Mammary epithelial cell (primary cell): ENCODE measurements at regions of chr6 and their contacts with region 1.

Region 1: GRCh38 chr6:136792410-136793262 is at the start of gene MAP3K5:
- DNase-seq: peak; percentile 90
- H3K4me3 ChIP-seq: peak within 1 kb of the TSS; percentile 68 to 97 (median 79)
- H3K27ac ChIP-seq: peak within 1 kb of the TSS; percentile 82
- H3K4me1 ChIP-seq: peaks cover 19% of the 10 kb centered on the region
- H3K27me3 ChIP-seq: no peaks in the 10 kb centered on the region
- CTCF ChIP-seq: peak; percentile 66 to 95
- total RNA-seq, gene MAP3K5: 4.2 to 8.8 TPM

Region 2: DNA sequence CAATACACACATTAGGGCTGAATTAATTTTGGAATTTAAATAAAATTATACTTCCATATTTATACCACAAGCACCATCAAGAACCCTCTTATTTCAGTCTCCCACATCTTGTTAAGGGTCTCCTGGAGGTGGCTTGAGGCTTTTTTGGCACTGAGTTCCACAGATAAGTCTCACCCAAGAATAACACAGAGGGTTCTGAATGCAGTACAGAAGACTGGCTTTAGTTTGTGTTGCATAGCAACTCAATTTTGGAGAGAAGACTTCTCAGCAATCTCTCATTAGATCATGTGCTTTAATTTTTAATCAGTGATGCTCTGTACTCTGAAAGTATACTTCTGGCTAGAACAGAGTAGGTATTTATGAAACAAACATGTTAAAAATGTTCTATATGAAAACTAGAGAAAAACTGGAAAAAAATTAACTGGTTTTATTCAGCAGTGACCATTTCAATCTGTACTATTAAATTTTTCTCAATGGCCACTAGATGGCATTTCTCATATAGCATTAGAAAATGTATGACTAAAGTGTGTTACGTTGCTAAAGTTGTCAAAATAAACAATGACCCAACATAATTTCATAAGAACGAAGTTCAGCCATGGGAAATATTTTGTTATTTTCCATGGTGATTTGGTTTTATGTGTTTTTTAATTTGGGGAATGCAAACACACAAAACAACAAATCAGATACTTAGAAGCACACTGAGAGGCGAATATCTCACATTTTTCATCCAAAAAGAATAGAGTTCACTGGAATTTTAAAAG is 209.7 kb before region 1 on chr6:
- CTCF ChIA-PET with region 1: interaction called, 4 read pairs
- dilution Hi-C with region 1: no loop called
- in situ Hi-C with region 1: loop called in 1 of 2 experiments (anchors 10 kb)
- intact Hi-C with region 1: loop called (anchors 1 kb)
- DNase-seq: peak; percentile 69
- H3K4me3 ChIP-seq: no peak overlapping the region
- H3K27ac ChIP-seq: peak overlapping the region; percentile 96
- H3K4me1 ChIP-seq: peaks cover 9% of the 10 kb centered on the region
- H3K27me3 ChIP-seq: no peaks in the 10 kb centered on the region
- CTCF ChIP-seq: peak; percentile 55

Region 3: DNA sequence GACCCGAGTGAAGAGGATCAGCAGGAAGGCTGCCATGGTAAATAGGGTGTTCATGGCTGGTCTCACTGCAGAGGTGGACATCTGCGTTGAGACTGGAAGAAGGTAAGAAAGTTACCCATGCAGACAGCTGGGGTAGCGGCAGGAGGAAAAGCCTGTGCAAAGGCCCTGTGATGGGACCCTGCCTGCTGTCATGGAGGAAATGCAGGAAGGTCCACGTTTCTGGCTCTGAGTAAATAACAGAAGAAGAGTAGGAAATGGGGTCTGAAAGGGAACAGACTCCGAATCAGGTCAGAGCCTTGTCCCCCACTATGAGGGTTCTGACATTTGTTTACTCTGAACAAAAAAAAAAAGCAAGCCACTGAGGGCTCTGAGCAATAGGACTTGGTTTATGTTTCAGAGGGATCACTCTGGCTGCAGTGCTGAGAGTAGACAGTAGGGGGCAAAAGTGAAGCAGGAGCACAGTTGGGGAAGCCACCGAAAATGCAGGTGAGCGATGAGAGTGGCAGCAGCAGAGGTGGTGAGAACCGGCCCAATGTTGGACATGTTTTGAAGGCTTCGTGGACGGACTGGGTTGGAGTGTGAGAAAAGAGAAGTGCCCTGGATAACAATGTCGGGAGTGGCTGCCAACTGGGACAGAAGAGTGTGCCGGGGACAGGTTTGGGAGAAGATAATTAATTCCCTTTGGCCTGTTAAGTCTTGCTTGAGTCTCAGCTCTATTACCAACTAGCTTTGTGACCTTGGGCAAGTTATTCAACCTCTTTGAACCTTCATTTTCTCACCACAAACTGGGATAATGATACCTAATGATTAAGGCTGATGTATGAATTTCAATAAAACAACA is 184.5 kb before region 1 on chr6:
- CTCF ChIA-PET with region 1: interaction called, 12 read pairs
- dilution Hi-C with region 1: no loop called
- in situ Hi-C with region 1: no loop called
- intact Hi-C with region 1: loop called (anchors 1 kb)
- DNase-seq: peak; percentile 76
- H3K4me3 ChIP-seq: no peak overlapping the region
- H3K27ac ChIP-seq: peak overlapping the region; percentile 35
- H3K4me1 ChIP-seq: peaks cover 35% of the 10 kb centered on the region
- H3K27me3 ChIP-seq: no peaks in the 10 kb centered on the region
- CTCF ChIP-seq: peak; percentile 94 to 97

Region 4: DNA sequence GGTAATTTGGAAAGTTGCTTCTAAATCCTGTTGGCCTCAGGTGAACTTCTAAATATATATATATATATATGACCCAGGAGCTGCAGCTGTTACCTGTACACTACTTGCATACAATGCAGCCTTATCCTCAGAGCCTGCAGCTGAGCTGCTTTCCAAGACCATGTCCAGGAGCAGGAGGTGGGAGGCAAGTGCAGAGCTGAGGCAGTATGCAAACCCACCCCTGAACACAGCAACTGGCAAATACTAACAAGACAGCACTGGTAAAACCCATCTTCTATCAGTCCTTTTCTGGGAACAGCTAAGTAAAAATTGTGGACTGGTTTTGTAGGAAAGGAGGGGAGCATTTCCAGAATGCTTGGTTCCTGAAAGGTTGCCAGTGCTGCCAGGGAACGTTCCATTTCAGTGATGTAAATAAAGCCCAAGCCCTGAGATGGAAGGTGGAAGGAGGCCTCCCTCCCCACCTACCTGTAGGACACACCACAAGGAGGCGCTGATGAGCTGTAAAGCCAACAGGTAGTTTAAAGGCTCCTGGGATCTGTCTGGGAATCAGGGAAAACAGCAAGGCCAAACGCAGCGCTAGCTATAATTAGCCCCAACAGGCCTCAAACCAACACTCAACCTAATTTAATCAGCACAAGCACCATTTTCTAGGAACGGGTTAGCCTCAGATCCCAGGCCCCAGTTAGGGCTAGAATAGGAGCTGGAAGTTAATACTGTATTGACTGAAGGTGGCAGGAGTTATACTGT is 148.6 kb before region 1 on chr6:
- CTCF ChIA-PET with region 1: interaction called, 154 read pairs
- dilution Hi-C with region 1: no loop called
- in situ Hi-C with region 1: loop called (anchors 5 kb)
- intact Hi-C with region 1: loop called (anchors 1 kb)
- DNase-seq: peak; percentile 80
- H3K4me3 ChIP-seq: no peak overlapping the region
- H3K27ac ChIP-seq: no peak overlapping the region
- H3K4me1 ChIP-seq: peaks cover 7% of the 10 kb centered on the region
- H3K27me3 ChIP-seq: no peaks in the 10 kb centered on the region
- CTCF ChIP-seq: peak; percentile 96 to 97

Region 5: GRCh38 chr6:136719280-136720044 is 73.2 kb before region 1 on chr6:
- CTCF ChIA-PET with region 1: no interaction called
- dilution Hi-C with region 1: no loop called
- in situ Hi-C with region 1: no loop called
- intact Hi-C with region 1: loop called (anchors 5 kb)
- DNase-seq: no peak
- H3K4me3 ChIP-seq: no peak overlapping the region
- H3K27ac ChIP-seq: no peak overlapping the region
- H3K4me1 ChIP-seq: peaks cover 13% of the 10 kb centered on the region
- H3K27me3 ChIP-seq: no peaks in the 10 kb centered on the region
- CTCF ChIP-seq: no peak

Region 6: GRCh38 chr6:136927292-136927691 is 134.7 kb after region 1 on chr6:
- CTCF ChIA-PET with region 1: no interaction called
- dilution Hi-C with region 1: no loop called
- in situ Hi-C with region 1: no loop called
- intact Hi-C with region 1: loop called (anchors 1 kb)
- DNase-seq: peak; percentile 8
- H3K4me3 ChIP-seq: no peak overlapping the region
- H3K27ac ChIP-seq: no peak overlapping the region
- H3K4me1 ChIP-seq: peaks cover 3% of the 10 kb centered on the region
- H3K27me3 ChIP-seq: peaks cover 14% of the 10 kb centered on the region
- CTCF ChIP-seq: peak in 1 of 2 donors; percentile 26